Prostate gland (tissue), 2 donors: ENCODE measurements at regions of chr11 and their contacts with region 1.

Region 1: DNA sequence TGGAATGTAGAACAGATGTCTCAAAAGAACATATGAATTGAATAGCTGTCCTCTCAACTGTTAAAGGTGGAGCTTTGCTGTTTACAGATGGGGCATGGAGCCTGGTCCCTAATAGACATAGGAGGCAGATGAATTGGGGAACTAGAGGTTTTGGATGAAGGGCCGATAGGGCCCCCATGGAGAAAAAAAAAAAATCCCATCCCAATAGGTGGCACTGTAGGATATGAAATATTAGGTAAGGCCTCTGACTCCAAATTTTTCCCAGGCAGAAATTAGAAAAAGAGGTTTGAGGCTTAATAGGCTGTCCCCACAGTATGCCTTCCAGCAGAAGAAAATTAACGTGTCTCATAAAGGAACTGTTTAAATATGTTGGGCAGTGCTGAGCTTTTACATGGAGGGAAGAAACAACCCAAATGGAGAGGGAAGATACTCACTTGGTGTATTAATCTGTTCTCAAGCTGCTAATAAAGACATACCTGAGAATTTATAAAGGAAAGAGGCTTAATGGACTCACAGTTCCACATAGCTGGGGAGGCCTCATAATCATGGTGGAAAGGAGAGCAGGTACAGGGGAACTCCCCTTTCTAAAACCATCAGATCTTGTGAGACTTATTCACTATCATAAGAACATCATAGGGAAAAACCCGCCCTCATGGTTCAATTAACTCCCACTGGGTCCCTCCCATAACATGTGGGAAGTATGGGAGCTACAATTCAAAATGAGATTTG is 30.1 kb upstream of the TMEM45B start:
- DNase-seq: no peak
- H3K4me3 ChIP-seq: no peak overlapping the region
- H3K27ac ChIP-seq: no peak overlapping the region
- H3K4me1 ChIP-seq: no peaks in the 10 kb centered on the region
- H3K27me3 ChIP-seq: no peaks in the 10 kb centered on the region
- CTCF ChIP-seq: peak in 3 of 4 experiments; percentile 20 to 37 (median 35)
- POLR2A ChIP-seq: no peak

Region 2: DNA sequence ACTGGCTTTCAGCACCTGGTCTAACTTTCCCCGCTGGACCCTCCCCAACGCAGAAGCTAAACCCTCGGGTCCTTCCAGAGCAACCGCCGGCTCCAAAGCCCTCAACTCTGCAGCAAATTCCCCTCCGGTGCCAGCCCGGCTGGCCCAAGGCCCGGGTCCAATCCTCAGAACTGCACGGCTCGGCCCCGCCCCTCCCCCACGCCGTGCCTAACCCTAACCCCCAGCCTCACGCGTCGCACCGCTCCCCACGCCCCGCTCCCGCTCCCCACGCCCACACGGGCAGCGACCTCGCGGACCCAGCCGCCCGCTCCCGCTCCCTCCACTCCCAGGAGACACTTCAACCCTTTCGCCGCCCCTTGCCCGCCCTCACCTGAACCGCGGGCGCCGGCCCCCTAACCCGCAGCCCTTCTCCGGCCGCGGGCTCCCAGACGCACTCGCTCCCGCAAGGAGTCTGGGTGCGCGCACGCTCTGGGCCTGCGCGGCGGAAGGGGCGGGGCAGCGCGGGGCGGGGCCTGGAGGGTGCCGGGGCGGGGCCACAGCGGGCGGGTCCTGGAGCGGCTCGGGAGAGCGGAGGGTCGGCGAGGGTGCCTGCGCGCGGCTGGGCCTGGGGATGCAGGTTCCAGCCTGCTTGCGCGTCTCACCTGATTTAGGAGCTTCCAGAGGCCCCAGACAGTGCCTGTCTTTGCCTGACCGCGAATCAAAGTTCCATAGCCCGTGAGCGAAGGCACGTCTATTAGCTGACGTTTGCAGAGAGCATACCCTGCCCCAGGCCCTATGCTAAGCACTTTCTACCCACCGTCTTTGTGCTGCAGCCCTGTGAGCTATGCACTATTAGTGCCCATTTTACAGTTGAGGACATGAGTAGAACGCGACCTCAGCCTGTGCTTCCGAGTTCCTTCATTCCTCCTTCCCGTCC is 109.8 kb after region 1 on chr11 and contains the start of gene NFRKB:
- intact Hi-C with region 1: loop called (anchors 10 kb)
- DNase-seq: peak; percentile 82
- H3K4me3 ChIP-seq: peak within 1 kb of the TSS; percentile 72 to 84
- H3K27ac ChIP-seq: peak within 1 kb of the TSS; percentile 64 to 80
- H3K4me1 ChIP-seq: no peaks in the 10 kb centered on the region
- H3K27me3 ChIP-seq: no peaks in the 10 kb centered on the region
- CTCF ChIP-seq: peak in 1 of 4 experiments; percentile 10
- POLR2A ChIP-seq: peak; percentile 83
- total RNA-seq, gene NFRKB: 26.2 to 51.4 TPM

Region 3: DNA sequence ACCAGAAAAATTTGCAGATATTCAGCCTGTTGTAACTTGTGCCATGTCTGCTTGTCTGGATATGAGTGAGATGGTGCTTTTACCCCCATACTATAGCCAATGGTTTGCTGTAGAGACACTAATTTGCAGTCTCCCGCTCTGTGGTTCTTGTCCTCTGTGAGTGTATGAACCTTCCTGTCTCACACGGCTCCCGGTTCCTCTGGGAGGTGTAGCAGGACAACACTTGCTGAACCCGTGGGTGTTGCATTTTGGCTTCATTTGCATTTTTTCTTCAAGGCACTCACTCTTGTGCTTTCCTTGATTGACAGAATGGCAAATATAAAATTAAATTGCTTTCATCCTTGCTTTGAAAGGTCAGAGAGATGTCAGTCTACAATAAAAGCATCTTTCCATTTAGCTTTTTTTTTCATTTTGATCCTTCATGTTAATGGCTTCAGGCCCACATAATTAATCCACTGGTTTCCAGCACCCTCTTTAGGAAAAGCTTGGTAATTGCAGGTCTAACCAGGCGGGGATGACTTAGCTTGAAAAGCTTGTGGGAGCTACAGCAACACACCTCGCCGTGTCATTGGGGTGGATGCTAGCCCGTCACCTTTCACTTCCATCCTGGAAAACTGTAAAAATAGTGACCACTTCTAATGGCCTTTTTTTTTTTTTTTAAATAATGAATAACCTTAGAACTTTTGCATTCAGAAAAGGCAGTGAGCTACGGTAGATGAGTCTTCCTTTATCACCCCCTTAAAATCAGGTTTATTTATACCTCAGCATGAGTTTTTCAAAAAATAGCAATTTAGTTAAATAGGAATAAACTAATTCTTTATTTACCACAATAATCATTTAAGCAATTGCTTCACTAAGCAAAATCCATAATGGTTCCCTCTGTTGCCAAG is 346.7 kb after region 1 on chr11:
- intact Hi-C with region 1: loop called (anchors 5 kb)
- DNase-seq: peak; percentile 46
- H3K4me3 ChIP-seq: no peak overlapping the region
- H3K27ac ChIP-seq: no peak overlapping the region
- H3K4me1 ChIP-seq: no peaks in the 10 kb centered on the region
- H3K27me3 ChIP-seq: no peaks in the 10 kb centered on the region
- CTCF ChIP-seq: peak; percentile 52 to 87 (median 78)
- POLR2A ChIP-seq: no peak

Region 4: GRCh38 chr11:130145975-130146776 is 360.6 kb after region 1 on chr11:
- intact Hi-C with region 1: no loop called
- DNase-seq: no peak
- H3K4me3 ChIP-seq: no peak overlapping the region
- H3K27ac ChIP-seq: no peak overlapping the region
- H3K4me1 ChIP-seq: no peaks in the 10 kb centered on the region
- H3K27me3 ChIP-seq: no peaks in the 10 kb centered on the region
- CTCF ChIP-seq: peak in 1 of 4 experiments; percentile 48
- POLR2A ChIP-seq: no peak